ENCODE measurements at regions of chr19 and their contacts with region 1.

Region 1: DNA sequence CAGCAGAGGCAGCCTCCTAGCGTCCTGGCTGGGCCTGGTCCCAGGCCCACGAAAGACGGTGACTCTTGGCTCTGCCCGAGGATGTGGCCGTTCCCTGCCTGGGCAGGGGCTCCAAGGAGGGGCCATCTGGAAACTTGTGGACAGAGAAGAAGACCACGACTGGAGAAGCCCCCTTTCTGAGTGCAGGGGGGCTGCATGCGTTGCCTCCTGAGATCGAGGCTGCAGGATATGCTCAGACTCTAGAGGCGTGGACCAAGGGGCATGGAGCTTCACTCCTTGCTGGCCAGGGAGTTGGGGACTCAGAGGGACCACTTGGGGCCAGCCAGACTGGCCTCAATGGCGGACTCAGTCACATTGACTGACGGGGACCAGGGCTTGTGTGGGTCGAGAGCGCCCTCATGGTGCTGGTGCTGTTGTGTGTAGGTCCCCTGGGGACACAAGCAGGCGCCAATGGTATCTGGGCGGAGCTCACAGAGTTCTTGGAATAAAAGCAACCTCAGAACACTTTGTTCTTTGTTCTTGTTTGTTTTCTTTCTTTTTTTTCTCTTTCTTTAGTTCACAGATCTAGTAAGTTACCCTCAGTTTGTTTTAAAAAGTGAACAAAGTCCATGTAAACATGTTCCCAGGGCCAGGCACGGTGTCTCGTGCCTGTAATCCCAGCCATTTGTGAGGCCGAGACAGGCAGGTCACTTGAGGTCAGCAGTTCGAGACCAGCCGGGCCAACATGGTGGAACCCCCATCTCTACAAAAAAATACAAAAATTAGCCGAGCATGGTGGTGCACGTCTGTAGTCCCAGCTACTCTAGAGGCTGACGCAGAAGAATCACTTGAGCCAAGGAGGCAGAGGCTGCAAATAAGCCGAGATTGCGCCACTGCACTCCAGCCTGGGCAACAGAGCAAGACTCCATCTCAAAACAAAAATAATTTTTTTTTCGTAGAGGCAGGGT is 10.2 kb downstream of the ANGPTL4 start:
- DNase-seq: no peak
- H3K4me3 ChIP-seq: no peak overlapping the region
- CTCF ChIP-seq: no peak

Region 2: DNA sequence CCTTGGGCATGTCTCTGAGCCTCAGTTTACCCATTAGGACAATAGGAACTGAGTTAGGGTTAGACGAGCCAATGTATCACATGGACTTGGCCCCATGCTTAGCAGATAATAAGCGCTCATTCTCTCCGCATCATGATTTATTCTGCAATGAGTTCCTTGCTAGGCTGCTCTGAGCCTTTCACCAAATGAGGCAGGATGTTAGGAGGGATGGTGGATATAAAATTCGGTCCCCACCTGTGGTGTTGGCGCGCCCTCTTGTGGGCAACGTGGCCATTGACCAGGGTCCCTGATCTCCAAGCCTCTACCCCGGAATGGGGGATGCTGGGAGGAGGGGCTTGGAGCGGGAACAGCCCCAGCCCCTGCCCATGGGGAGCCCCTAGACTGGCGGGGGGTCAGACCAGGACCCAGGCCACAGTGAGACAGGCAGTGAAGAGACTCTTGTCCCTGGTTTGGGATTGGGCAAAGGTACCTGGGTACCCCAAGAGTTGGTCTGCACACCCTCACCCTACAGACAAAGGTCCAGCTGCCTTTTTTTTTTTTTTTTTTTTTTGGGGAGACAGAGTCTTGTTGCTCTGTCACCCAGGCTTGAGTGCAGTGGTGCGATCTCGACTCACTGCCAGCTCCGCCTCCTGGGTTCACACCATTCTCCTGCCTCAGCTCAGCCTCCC is 121.1 kb before region 1 on chr19:
- in situ Hi-C with region 1: no loop called
- DNase-seq: peak; percentile 50
- H3K4me3 ChIP-seq: no peak overlapping the region
- CTCF ChIP-seq: peak; percentile 91

Region 3: GRCh38 chr19:8304841-8305621 is 69.1 kb before region 1 on chr19:
- in situ Hi-C with region 1: no loop called
- DNase-seq: no peak
- H3K4me3 ChIP-seq: no peak overlapping the region
- CTCF ChIP-seq: no peak

Region 4: DNA sequence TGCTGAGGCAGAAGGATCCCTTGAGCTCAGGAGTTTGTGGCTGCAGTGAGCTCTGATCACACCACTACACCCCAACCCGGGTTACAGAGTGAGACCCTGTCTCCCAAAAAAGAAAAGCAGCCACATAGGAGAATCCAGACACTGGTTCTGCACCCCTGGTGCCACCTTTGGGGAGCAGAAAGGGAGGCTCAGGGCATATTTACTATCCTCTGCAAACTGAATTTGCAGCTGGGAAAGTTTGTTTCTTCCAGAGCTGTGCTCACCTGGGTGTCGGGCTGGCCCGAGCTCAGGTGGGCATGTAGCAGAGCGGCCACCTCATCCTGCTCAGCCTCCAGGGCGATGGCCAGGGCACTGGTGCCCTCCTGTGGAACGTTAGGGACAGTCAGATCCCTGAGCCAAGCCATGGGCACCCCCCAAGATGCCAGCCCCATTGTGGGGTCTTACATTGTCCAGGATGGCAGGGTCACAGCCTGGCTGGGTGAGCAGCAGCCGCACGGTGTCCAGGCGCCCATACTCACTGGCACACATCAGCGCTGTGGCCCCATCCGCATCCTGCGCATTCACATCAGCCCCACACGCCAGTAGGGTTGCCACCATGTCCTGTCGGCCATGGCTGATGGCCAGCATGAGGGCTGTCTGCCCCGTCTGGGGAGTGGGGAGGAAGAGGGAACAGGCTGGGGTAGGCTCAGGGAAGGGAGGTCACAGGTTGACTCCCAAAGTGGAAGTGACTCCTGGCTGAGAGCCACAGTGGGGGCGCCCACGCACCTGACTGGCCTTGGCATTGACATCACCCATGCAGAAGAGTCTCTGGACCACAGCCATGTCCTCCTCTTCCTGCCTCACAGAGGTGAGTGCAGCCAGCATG is 49.7 kb before region 1 on chr19:
- in situ Hi-C with region 1: no loop called
- DNase-seq: no peak
- H3K4me3 ChIP-seq: no peak overlapping the region
- CTCF ChIP-seq: no peak

Region 5: DNA sequence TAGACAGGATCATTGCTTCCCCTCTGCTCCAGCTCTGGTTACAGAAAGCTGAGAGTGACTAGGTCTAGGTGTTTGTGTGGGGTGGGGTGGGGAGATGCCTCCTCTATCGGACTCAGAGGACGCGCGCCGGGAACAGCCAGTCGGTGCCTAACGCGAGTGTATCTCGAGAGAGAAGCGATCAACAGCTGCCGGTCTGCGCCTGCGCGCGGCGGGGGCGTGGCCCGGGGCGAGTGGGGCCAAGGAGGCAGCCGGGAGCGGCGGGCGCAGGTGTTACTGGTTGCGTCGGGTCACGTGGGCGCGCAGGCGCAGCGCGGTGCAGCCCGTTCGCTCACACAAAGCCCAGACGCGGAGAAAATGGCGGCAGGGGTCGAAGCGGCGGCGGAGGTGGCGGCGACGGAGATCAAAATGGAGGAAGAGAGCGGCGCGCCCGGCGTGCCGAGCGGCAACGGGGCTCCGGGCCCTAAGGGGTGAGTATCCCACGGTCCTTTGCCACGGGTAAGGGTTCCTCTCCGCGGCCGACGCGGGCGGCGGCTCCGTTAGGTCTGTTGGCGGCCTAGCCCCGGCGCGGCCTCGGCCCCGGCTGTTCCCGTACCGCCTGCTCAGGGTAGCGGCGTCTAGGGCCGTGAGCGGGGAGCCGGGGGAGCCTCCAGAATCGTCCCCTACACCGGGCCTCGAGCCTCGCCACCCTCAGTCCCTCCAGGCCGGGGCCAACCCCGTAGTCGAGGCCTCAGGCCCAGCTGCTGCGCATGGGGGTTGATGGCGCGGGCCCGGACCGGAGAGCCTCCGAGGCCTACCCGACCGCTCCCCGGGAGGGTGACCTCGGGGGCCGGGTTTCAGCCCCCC is 70.7 kb after region 1 on chr19 and contains the start of gene HNRNPM:
- in situ Hi-C with region 1: loop called (anchors 5 kb)
- DNase-seq: peak; percentile 91
- H3K4me3 ChIP-seq: peak within 1 kb of the TSS; percentile 92
- CTCF ChIP-seq: no peak

Region 6: GRCh38 chr19:8473648-8474476 is 99.7 kb after region 1 on chr19:
- in situ Hi-C with region 1: no loop called
- DNase-seq: no peak
- H3K4me3 ChIP-seq: no peak overlapping the region
- CTCF ChIP-seq: no peak

Region 7: DNA sequence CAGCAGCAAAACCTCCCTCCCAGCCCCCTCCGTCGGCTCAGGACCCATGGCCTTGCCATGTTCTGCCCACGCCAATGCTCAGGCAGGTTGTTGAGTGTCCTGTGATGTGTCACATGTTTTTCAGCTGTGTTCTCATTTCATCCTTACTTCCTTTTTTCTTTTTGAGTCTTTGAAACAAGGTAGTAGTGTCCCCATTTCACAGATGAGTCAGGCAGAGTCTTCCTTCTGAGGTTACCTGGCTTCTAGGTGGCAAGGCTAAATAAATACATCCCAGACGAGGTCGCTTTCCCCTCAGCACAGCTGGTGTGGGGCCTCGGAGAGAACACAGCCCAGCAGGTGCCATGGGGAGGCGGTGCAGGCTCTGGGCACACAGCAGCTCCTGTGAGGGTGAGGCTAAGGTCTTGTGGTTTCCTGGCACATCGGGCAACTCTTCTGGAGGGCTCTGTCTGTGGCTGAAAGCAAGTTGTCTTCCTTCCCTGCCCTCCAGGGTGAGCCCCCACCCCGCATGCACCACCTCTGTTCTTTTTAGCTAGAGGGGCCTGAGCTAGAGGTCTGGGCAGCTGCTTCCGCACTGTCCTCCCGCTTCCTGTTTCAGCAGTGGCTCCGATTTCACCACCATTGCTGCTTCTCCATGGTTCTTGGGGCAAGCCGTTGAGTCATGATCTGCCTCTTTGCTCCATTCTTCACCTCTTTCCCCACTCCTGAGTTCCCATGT is 113.2 kb after region 1 on chr19:
- in situ Hi-C with region 1: loop called (anchors 10 kb)
- DNase-seq: no peak
- H3K4me3 ChIP-seq: no peak overlapping the region
- CTCF ChIP-seq: no peak

Measured in astrocyte of the cerebellum (primary cell).